Colonic mucosa (tissue), 4 donors: ENCODE measurements at regions of chr19 and their contacts with region 1.

Region 1: DNA sequence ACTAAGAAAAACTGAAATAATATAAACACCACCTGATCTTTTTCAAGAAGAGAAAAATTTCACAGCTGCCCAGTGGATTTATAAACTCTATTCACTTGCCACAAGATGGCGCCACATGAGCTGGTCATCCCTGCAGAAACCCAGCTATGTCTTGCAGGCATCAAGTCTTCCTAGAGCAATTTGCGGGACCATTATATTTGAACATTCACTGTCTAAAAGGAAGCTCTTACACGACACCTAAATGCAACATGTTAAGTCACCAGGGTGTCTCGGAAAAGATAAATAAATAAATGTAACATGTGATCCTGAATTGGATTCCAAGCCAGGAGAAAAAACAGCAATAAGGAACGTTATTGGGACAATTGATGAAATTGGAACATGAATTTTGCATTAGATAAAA is 20.3 kb upstream of the AKT2 start:
- DNase-seq: peak; percentile 80
- H3K4me3 ChIP-seq: no peak overlapping the region
- H3K27ac ChIP-seq: no peak overlapping the region
- H3K4me1 ChIP-seq: no peaks in the 10 kb centered on the region
- H3K27me3 ChIP-seq: no peaks in the 10 kb centered on the region
- CTCF ChIP-seq: peak; percentile 69

Region 2: DNA sequence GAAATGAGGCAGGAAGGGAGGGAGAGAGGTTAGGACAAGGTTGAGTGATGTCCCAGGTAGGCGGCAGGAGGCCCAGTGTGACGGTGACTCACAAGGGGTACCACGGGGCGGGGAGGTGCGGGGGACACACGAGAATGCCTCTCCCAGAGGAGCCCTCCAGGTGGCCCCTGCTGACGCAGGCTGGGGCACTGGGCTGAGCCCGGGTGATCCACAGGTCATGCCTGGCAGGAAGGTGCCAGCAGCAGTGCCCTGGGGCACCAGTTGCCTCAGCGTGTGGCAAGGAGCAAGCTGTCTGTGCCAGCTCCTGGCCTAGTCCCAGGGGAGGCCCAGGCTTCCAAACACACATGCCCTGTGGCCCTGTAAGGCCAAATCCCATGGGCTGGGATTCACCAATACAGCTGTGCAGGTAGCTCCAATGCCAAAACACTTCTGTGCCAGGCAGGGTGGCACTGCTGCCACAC is 48.3 kb before region 1 on chr19:
- intact Hi-C with region 1: no loop called
- DNase-seq: no peak
- H3K4me3 ChIP-seq: no peak overlapping the region
- H3K27ac ChIP-seq: no peak overlapping the region
- H3K4me1 ChIP-seq: no peaks in the 10 kb centered on the region
- H3K27me3 ChIP-seq: no peaks in the 10 kb centered on the region
- CTCF ChIP-seq: no peak

Region 3: GRCh38 chr19:40465557-40466150 is 160.3 kb after region 1 on chr19 and contains the start of gene BLVRB:
- intact Hi-C with region 1: loop called (anchors 10 kb)
- DNase-seq: peak; percentile 100
- H3K4me3 ChIP-seq: peak within 1 kb of the TSS; percentile 85
- H3K27ac ChIP-seq: peak within 1 kb of the TSS; percentile 94
- H3K4me1 ChIP-seq: peaks cover 16% of the 10 kb centered on the region
- H3K27me3 ChIP-seq: peaks cover 6% of the 10 kb centered on the region
- CTCF ChIP-seq: no peak
- total RNA-seq, gene BLVRB: 76.5 to 94.9 TPM

Region 4: DNA sequence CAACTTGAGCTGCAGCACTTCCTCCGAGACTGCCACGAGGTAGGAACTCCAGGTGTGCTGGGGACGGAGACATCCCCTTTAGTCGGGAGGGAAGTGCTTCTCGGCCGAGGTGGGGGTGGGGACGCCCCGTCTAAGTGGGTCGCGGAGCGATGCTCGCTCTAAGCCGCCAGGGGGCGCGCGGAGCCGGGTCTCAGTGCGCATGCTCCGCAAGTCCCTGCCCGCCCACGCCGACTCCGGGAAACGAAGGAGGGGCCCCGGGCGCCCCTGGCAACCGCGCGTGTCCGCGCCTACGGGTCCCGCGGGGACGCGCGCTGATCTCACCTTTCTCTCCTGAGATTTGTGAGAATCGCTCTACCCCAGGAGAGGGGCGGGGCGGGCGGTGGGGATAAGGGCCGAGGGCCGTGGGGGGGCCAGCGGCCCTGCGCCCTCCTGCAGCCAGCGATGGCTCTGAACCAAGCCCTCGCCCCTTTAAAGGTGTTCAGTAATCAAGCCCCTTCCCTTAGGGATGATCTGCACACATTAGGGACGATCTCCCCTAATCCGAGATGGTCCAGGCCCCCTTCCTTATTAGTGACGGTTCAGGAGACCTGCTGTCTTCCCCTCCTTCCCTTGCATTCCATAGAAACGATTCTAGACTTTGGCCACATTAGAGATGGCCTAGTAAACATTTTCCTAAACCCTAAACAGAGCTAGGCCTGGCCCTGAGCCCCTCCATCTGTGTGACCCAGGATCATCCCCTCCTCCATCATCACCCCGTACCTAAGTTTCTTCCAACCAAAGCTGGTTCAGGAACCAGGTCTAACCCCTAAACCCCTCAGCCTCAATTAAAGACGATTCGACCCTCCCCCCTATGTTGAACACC is 223.9 kb after region 1 on chr19:
- intact Hi-C with region 1: loop called (anchors 10 kb)
- DNase-seq: peak; percentile 83
- H3K4me3 ChIP-seq: peak overlapping the region; percentile 48
- H3K27ac ChIP-seq: no peak overlapping the region
- H3K4me1 ChIP-seq: no peaks in the 10 kb centered on the region
- H3K27me3 ChIP-seq: no peaks in the 10 kb centered on the region
- CTCF ChIP-seq: peak; percentile 85